Activated CD4-positive, alpha-beta T cell treated with anti-CD3 and anti-CD28 coated beads for 36 hours (primary cell): ENCODE measurements at regions of chr6 and their contacts with region 1.

Region 1: GRCh38 chr6:12289933-12290820 is at the start of gene EDN1:
- DNase-seq: peak; percentile 82
- ATAC-seq: peak; percentile 94
- H3K4me3 Mint-ChIP-seq: peak within 1 kb of the TSS; percentile 74
- H3K27ac Mint-ChIP-seq: no peak within 1 kb of the TSS
- H3K4me1 Mint-ChIP-seq: peaks cover 15% of the 10 kb centered on the region
- H3K27me3 Mint-ChIP-seq: peaks cover 36% of the 10 kb centered on the region
- total RNA-seq, gene EDN1: not detected

Region 2: DNA sequence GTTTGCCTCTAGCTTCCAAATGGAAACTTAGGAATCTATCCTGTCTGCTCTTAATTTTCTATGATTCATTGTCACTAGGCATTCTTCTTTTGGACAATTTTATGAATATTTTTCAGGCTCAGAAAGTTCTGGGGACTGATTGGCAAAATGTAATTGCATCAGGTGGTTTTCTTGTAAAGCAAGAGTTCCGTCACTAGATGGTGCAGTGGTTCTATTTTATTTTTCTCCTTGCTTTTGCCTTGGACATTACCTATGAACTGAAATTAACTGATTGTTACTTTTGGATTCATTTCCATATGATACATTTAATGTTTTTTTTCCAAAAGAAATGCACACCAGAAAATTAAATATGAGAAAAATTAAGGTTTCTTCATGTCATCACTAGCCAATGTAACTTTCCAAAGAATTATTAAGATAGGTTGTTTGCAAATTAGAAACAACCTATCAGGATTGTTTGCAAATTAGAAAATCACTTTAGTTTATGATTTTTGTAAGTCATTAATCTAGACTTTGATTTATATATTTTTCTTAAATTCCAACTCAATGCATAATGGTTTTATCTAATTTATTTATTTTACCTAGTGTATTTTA is 704.7 kb before region 1 on chr6:
- CTCF ChIA-PET with region 1: no interaction called
- POLR2A ChIA-PET with region 1: no interaction called
- intact Hi-C with region 1: loop called (anchors 1 to 2 kb)
- DNase-seq: no peak
- ATAC-seq: no peak
- H3K4me3 Mint-ChIP-seq: no peak overlapping the region
- H3K27ac Mint-ChIP-seq: no peak overlapping the region
- H3K4me1 Mint-ChIP-seq: no peaks in the 10 kb centered on the region
- H3K27me3 Mint-ChIP-seq: peaks cover 2% of the 10 kb centered on the region

Region 3: DNA sequence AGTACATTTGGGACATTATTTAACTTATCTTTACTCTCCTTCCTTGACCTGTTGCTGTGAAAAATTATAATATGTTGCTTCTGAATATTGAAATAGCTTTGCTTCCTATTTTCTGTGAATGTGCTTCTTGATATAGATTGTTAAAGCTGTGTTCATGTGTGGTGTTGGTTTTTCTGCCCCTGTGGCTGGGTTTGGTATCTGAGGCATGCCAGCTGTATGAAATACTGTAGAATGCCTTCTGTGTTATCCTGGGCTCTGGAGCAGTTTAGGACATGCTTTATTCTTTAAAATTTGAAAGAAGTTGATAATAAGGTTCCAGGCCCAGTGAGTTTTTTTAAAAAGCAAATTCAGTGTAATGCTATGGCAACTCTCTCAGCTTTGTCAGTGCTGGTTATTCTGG is 206.4 kb before region 1 on chr6:
- CTCF ChIA-PET with region 1: no interaction called
- POLR2A ChIA-PET with region 1: no interaction called
- intact Hi-C with region 1: no loop called
- DNase-seq: no peak
- ATAC-seq: no peak
- H3K4me3 Mint-ChIP-seq: no peak overlapping the region
- H3K27ac Mint-ChIP-seq: no peak overlapping the region
- H3K4me1 Mint-ChIP-seq: peaks cover 50% of the 10 kb centered on the region
- H3K27me3 Mint-ChIP-seq: no peaks in the 10 kb centered on the region

Region 4: GRCh38 chr6:12233693-12234571 is 56.2 kb before region 1 on chr6:
- CTCF ChIA-PET with region 1: interaction called, 12 read pairs
- POLR2A ChIA-PET with region 1: no interaction called
- intact Hi-C with region 1: no loop called
- DNase-seq: peak; percentile 43
- ATAC-seq: peak; percentile 93
- H3K4me3 Mint-ChIP-seq: no peak overlapping the region
- H3K27ac Mint-ChIP-seq: no peak overlapping the region
- H3K4me1 Mint-ChIP-seq: peaks cover 40% of the 10 kb centered on the region
- H3K27me3 Mint-ChIP-seq: no peaks in the 10 kb centered on the region

Region 5: DNA sequence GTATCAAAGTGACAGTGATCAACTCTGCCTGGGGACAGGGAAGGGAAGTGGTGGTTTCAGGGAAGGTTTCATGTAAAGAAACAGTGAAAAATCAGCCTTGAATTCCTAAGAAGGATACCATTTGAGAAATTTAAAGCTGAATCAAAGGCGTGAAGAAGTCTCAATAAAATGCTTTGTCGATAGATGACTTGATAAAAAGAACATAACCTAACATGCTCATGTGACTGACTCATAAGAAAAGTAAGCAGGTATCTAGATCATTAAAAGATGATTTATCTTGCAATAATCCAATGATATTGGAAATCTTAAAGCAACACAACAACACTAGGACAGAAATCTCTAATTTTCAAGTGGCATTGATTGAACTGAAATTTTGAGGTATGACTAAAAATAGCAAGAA is 14.3 kb after region 1 on chr6:
- CTCF ChIA-PET with region 1: interaction called, 27 read pairs
- POLR2A ChIA-PET with region 1: no interaction called
- intact Hi-C with region 1: no loop called
- DNase-seq: no peak
- ATAC-seq: no peak
- H3K4me3 Mint-ChIP-seq: no peak overlapping the region
- H3K27ac Mint-ChIP-seq: no peak overlapping the region
- H3K4me1 Mint-ChIP-seq: no peaks in the 10 kb centered on the region
- H3K27me3 Mint-ChIP-seq: peaks cover 16% of the 10 kb centered on the region

Region 6: GRCh38 chr6:12605888-12606345 is 315.7 kb after region 1 on chr6:
- CTCF ChIA-PET with region 1: interaction called, 8 read pairs
- POLR2A ChIA-PET with region 1: no interaction called
- intact Hi-C with region 1: loop called (anchors 2 to 5 kb)
- DNase-seq: peak; percentile 68
- ATAC-seq: peak; percentile 81
- H3K4me3 Mint-ChIP-seq: no peak overlapping the region
- H3K27ac Mint-ChIP-seq: no peak overlapping the region
- H3K4me1 Mint-ChIP-seq: peaks cover 7% of the 10 kb centered on the region
- H3K27me3 Mint-ChIP-seq: peaks cover 22% of the 10 kb centered on the region